ENCODE measurements at regions of chr7 and their contacts with region 1.

Region 1: DNA sequence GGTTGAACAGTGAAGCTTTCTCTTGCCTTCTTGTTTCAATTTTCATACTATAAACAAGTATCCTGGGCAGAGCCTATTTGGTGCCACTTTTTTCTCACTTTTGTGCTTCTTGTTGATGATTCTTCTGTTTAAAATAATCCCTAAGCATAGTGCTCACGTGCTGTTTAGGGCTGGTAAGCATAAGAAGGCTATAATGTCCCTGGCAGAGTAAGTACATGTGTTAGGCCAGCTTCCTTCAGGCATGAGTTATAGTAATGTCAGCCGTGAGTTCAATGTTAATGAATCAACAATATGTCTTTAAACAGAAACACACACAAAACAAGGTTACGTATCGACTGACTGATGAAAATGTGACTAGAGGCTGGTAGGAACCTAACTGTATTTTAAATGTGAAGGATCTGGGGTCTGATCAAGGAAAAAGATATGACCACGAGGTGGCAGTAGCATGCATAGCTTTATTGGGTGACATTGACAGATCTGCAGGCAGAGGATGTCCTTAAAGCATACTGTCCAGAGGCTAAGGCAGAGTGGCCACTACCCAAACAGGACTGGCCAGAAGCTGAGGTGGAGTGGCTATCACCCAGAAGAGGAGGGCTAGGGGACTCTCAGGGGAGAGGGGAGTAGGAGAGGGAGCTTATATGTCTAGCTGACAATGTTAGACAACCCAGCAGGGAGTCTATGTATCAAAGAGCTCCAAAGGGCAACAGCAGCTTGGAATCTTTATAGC is 113.7 kb downstream of the BRAF start:
- DNase-seq: peak; percentile 17 to 82 (median 61)
- ATAC-seq: peak; percentile 72
- H3K4me3 ChIP-seq: no peak overlapping the region
- H3K4me3 Mint-ChIP-seq: no peak overlapping the region
- H3K27ac ChIP-seq: no peak overlapping the region
- H3K27ac Mint-ChIP-seq: no peak overlapping the region
- H3K4me1 ChIP-seq: no peaks in the 10 kb centered on the region
- H3K4me1 Mint-ChIP-seq: peaks cover 4% of the 10 kb centered on the region
- H3K27me3 ChIP-seq: no peaks in the 10 kb centered on the region
- H3K27me3 Mint-ChIP-seq: no peaks in the 10 kb centered on the region
- CTCF ChIP-seq: peak; percentile 76

Region 2: DNA sequence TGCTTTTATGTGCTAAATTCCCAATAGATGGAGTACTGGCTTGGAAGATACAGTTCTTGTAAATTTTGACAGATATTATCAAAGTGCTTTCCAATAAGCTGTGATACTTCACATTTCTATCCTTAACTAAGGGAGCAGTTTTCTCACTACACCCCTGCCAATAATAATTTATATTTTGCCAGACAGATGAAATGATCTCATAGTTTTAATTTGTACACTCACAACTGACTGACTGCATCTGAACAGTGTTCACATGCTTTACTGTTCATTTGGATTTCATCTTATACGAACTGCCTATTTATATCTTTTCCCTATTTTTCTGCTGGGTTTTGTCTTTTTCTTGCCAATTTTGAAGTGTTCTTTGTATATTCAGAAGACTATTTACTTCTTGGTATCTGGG is 17.7 kb after region 1 on chr7:
- CTCF ChIA-PET with region 1: interaction called, 18 read pairs
- POLR2A ChIA-PET with region 1: no interaction called
- intact Hi-C with region 1: loop called in 1 of 2 experiments (anchors 1 kb)
- DNase-seq: no peak
- ATAC-seq: no peak
- H3K4me3 ChIP-seq: no peak overlapping the region
- H3K4me3 Mint-ChIP-seq: no peak overlapping the region
- H3K27ac ChIP-seq: no peak overlapping the region
- H3K27ac Mint-ChIP-seq: no peak overlapping the region
- H3K4me1 ChIP-seq: no peaks in the 10 kb centered on the region
- H3K4me1 Mint-ChIP-seq: no peaks in the 10 kb centered on the region
- H3K27me3 ChIP-seq: no peaks in the 10 kb centered on the region
- H3K27me3 Mint-ChIP-seq: no peaks in the 10 kb centered on the region
- CTCF ChIP-seq: no peak

Region 3: DNA sequence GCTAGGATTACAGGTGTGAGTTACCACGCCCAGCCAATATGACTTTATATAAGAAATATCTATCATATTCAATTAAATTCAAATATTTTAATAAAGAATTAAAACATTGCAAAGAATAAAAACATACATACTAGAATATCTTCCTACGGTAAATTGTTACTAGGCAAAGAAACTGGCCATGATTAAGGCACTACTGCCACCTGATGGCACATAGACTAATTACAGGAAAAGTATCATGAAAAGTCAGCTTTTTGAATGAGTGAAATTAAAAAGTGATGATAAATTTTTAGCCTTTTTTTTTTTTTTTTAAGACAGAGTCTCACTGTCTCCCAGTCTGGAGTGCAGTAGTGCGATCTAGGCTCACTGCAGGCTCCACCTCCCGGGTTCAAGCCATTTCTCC is 172.8 kb after region 1 on chr7:
- CTCF ChIA-PET with region 1: interaction called, 13 read pairs
- POLR2A ChIA-PET with region 1: no interaction called
- intact Hi-C with region 1: no loop called
- DNase-seq: peak in 2 of 9 experiments; percentile 19 to 25
- ATAC-seq: no peak
- H3K4me3 ChIP-seq: no peak overlapping the region
- H3K4me3 Mint-ChIP-seq: no peak overlapping the region
- H3K27ac ChIP-seq: no peak overlapping the region
- H3K27ac Mint-ChIP-seq: no peak overlapping the region
- H3K4me1 ChIP-seq: no peaks in the 10 kb centered on the region
- H3K4me1 Mint-ChIP-seq: no peaks in the 10 kb centered on the region
- H3K27me3 ChIP-seq: peaks cover 0 to 3% of the 10 kb centered on the region in 2 experiments
- H3K27me3 Mint-ChIP-seq: peaks cover 12% of the 10 kb centered on the region
- CTCF ChIP-seq: no peak